Transverse colon (tissue), 4 donors: ENCODE measurements at regions of chr12 and their contacts with region 1.

Region 1: DNA sequence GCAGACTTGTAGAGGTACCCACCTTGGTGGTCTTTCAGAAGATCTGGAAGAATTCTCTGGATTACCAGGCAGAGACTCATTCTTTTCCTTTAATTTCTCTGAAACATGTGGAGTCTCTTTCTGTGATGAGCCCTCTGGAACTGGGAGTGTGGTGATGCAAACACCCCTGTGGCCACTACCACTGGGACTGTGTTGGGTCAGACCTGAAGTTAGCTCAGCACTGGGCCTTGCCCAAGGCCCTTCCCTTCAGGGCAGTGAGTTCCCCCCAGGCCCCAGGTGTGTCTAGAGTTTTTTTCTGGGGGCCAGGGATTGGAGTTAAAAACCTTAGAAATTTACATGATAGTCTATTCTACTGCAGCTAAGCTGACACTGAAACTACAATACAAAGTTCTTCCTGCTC is 32.0 kb downstream of the TBC1D30 start:
- DNase-seq: no peak
- H3K4me3 ChIP-seq: no peak overlapping the region
- H3K27ac ChIP-seq: no peak overlapping the region
- H3K4me1 ChIP-seq: no peaks in the 10 kb centered on the region
- H3K27me3 ChIP-seq: no peaks in the 10 kb centered on the region
- CTCF ChIP-seq: no peak
- EP300 ChIP-seq: no peak
- POLR2A ChIP-seq: no peak

Region 2: GRCh38 chr12:64836862-64837261 is 19.6 kb before region 1 on chr12:
- in situ Hi-C with region 1: no loop called
- intact Hi-C with region 1: loop called (anchors 1 kb)
- DNase-seq: no peak
- H3K4me3 ChIP-seq: no peak overlapping the region
- H3K27ac ChIP-seq: no peak overlapping the region
- H3K4me1 ChIP-seq: peaks cover 3 to 41% (median 16%) of the 10 kb centered on the region in 4 donors
- H3K27me3 ChIP-seq: no peaks in the 10 kb centered on the region
- CTCF ChIP-seq: no peak
- EP300 ChIP-seq: no peak
- POLR2A ChIP-seq: no peak

Region 3: DNA sequence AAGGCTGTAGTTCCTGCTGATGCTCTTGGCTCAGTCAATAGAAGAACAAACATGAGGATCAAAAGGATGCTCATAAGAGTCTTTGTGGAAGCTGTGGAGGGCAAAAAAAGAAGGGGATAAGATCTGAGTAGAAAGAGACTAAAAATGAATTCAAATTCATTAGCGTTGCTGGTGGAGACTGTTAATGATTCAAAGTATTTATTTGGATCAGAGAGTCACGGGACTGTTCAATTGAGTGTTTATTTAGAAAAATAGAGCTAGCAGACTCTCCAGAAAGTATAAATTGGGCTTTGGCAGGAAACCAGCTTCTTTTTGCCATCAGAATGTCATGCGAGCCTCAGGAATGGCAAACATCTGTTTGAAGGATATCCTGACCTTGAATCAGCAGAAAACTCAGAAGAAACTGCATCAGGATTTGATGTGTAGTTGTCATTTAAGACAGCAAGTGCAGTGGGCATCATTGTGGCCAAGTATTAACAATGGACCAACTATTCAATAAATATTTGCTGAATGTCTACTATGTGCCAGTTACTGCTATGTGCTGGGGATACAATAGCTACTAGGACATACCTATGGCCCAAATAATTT is 94.4 kb after region 1 on chr12:
- in situ Hi-C with region 1: no loop called
- intact Hi-C with region 1: no loop called
- DNase-seq: no peak
- H3K4me3 ChIP-seq: no peak overlapping the region
- H3K27ac ChIP-seq: no peak overlapping the region
- H3K4me1 ChIP-seq: peaks cover 0 to 10% (median 0%) of the 10 kb centered on the region in 4 donors
- H3K27me3 ChIP-seq: no peaks in the 10 kb centered on the region
- CTCF ChIP-seq: no peak
- EP300 ChIP-seq: no peak
- POLR2A ChIP-seq: no peak